ENCODE measurements at regions of chr1 and their contacts with region 1.

Region 1: DNA sequence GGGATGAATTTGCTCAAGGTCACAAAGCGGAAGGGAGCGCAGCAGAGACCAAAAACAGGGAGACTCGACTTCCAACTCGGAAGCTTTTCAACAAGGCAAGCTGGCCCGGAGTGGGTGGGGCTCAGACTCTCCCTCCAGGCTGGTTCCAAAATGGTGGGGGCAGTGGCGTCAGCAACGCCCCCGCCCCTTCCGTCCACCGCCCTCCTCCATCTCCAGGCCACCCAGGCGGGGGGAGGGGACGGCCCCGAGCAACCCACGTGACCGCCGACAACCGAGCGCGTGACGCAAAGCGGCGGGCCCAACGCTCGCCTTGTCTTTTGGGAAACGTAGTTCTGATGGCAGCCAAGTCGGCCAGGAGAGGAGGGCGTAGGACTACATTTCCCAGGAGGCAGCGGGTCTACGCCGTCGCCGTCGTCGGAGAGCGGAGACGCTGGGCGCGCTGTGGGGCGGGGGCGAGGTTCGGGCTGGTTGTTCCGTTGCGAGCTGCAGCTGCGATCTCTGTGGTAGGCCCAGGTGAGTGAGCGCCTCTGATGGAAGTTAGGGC is at the start of gene THRAP3:
- DNase-seq: peak; percentile 100
- ATAC-seq: peak; percentile 93
- H3K4me3 Mint-ChIP-seq: peak within 1 kb of the TSS; percentile 96
- H3K27ac Mint-ChIP-seq: peak within 1 kb of the TSS; percentile 100
- H3K4me1 Mint-ChIP-seq: peaks cover 28% of the 10 kb centered on the region
- H3K27me3 Mint-ChIP-seq: no peaks in the 10 kb centered on the region
- total RNA-seq, gene THRAP3: 149 to 182 TPM

Region 2: GRCh38 chr1:35641233-35641866 is 582.7 kb before region 1 on chr1 and contains the start of gene PSMB2:
- CTCF ChIA-PET with region 1: no interaction called
- POLR2A ChIA-PET with region 1: no interaction called
- intact Hi-C with region 1: loop called in 1 of 2 experiments (anchors 5 kb)
- DNase-seq: peak; percentile 99
- ATAC-seq: peak; percentile 92
- H3K4me3 Mint-ChIP-seq: peak within 1 kb of the TSS; percentile 100
- H3K27ac Mint-ChIP-seq: peak within 1 kb of the TSS; percentile 100
- H3K4me1 Mint-ChIP-seq: peaks cover 26% of the 10 kb centered on the region
- H3K27me3 Mint-ChIP-seq: peaks cover 18% of the 10 kb centered on the region
- total RNA-seq, gene PSMB2: 97.1 to 125 TPM

Region 3: DNA sequence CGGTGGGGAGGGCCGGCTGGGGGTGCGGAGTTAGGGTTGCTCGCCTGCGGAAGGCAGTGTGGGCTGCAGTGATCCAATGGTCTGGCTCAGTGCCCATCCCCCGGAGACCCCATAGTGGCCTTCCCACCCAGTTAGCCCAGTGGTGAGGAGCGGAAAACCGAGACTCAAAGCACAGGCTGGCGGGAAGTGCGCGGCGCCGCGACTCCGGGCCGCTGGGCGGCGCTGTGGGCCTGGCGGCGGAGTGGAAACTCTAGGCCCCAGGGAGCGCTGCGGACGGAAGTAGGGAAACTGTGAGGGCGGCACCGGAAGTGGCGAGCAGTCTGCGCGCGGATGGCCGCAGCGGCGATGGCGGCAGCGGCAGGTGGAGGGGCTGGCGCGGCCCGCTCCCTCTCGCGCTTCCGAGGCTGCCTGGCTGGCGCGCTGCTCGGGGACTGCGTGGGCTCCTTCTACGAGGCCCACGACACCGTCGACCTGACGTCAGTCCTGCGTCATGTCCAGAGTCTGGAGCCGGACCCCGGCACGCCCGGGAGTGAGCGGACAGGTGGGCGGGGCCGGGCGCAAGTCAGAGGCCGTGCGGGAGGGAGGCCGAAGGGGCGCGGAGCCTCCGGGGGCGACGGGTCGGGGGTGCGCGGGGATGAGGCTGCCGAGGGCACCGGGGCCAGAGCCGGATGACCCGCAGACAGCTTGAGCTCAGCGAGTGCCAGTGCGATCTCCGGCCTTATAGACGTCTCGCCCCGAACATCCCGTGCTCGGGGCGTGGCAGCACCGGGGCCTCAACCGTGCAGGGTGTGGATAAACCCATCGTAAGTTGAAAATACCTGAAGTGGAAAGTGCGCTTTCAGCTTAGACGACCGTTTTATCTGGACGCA is 135.3 kb before region 1 on chr1 and contains the start of gene ADPRS:
- CTCF ChIA-PET with region 1: interaction called, 5 read pairs
- POLR2A ChIA-PET with region 1: no interaction called
- intact Hi-C with region 1: loop called (anchors 1 kb)
- DNase-seq: peak; percentile 95
- ATAC-seq: peak; percentile 89
- H3K4me3 Mint-ChIP-seq: peak within 1 kb of the TSS; percentile 88
- H3K27ac Mint-ChIP-seq: peak within 1 kb of the TSS; percentile 96
- H3K4me1 Mint-ChIP-seq: peaks cover 19% of the 10 kb centered on the region
- H3K27me3 Mint-ChIP-seq: peaks cover 16% of the 10 kb centered on the region
- total RNA-seq, gene ADPRS: 34.0 to 43.9 TPM

Region 4: GRCh38 chr1:36160949-36161485 is 63.0 kb before region 1 on chr1:
- CTCF ChIA-PET with region 1: interaction called, 3 read pairs
- POLR2A ChIA-PET with region 1: interaction called, 14 read pairs
- intact Hi-C with region 1: loop called in 1 of 2 experiments (anchors 1 kb)
- DNase-seq: peak; percentile 86
- ATAC-seq: peak; percentile 59
- H3K4me3 Mint-ChIP-seq: peak overlapping the region; percentile 76
- H3K27ac Mint-ChIP-seq: peak overlapping the region; percentile 94
- H3K4me1 Mint-ChIP-seq: peaks cover 62% of the 10 kb centered on the region
- H3K27me3 Mint-ChIP-seq: no peaks in the 10 kb centered on the region

Region 5: GRCh38 chr1:36285448-36286101 is 61.5 kb after region 1 on chr1:
- CTCF ChIA-PET with region 1: interaction called, 4 read pairs
- POLR2A ChIA-PET with region 1: interaction called, 5 read pairs
- intact Hi-C with region 1: loop called (anchors 1 to 2 kb)
- DNase-seq: peak; percentile 78
- ATAC-seq: peak; percentile 78
- H3K4me3 Mint-ChIP-seq: no peak overlapping the region
- H3K27ac Mint-ChIP-seq: peak overlapping the region; percentile 82
- H3K4me1 Mint-ChIP-seq: peaks cover 35% of the 10 kb centered on the region
- H3K27me3 Mint-ChIP-seq: no peaks in the 10 kb centered on the region

Region 6: DNA sequence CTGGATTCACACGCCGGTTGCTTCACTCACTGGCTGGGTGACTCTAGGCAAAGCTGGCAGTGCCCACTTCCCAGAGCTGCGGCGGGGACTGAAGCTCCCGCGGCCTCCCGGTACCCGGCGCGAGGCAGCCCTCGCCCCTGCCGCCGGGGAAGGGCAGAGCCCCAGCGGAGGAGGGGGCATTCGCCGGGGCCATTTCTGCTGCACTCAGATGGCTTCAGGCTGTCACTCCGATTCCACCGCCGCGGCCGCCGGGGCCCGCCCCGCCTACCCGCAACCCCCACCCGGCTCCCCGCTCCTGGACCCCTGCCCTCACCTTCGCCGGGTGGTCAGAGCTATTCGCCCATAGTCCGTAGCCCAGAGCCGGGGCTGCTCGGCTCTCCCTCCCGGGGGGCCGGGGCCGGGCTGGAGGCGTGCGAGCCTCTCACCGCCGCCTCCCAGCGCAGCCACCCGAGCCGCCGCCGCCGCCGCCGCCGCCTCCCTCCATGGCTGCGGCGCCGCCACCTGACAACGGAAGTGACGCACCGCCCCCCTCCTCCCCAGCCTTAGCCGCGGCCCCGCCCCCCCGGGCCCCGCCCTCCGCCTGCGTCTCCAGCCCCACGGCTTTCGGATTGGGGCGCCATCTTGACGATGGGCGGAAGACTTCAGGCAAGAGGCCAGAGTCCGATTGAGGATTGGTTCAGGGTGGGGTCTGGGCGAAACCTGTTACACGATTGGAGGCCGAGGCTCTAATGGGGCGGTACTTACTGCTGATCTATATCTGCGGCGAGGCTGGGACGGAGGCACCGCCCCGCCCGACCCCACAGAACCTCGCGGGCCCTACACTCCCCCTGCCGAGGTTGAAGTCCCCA is 161.6 kb after region 1 on chr1 and contains the start of gene STK40:
- CTCF ChIA-PET with region 1: no interaction called
- POLR2A ChIA-PET with region 1: interaction called, 7 read pairs
- intact Hi-C with region 1: loop called (anchors 1 kb)
- DNase-seq: peak; percentile 99
- ATAC-seq: peak; percentile 88
- H3K4me3 Mint-ChIP-seq: peak within 1 kb of the TSS; percentile 81
- H3K27ac Mint-ChIP-seq: peak within 1 kb of the TSS; percentile 100
- H3K4me1 Mint-ChIP-seq: peaks cover 58% of the 10 kb centered on the region
- H3K27me3 Mint-ChIP-seq: no peaks in the 10 kb centered on the region
- total RNA-seq, gene STK40: 38.8 to 51.3 TPM

Region 7: GRCh38 chr1:37474046-37474759 is 1250.1 kb after region 1 on chr1 and contains the start of gene ZC3H12A:
- CTCF ChIA-PET with region 1: no interaction called
- POLR2A ChIA-PET with region 1: no interaction called
- intact Hi-C with region 1: loop called in 1 of 2 experiments (anchors 10 kb)
- DNase-seq: peak; percentile 96
- ATAC-seq: peak; percentile 46
- H3K4me3 Mint-ChIP-seq: peak within 1 kb of the TSS; percentile 95
- H3K27ac Mint-ChIP-seq: peak within 1 kb of the TSS; percentile 98
- H3K4me1 Mint-ChIP-seq: peaks cover 42% of the 10 kb centered on the region
- H3K27me3 Mint-ChIP-seq: no peaks in the 10 kb centered on the region
- total RNA-seq, gene ZC3H12A: 29.7 to 31.2 TPM